AG04449 (cell line): ENCODE measurements at regions of chr14 and their contacts with region 1.

Region 1: GRCh38 chr14:68843471-68844209 is 50.8 kb upstream of the ZFP36L1 start:
- DNase-seq: no peak
- H3K4me3 ChIP-seq: no peak overlapping the region
- CTCF ChIP-seq: peak; percentile 94

Region 2: DNA sequence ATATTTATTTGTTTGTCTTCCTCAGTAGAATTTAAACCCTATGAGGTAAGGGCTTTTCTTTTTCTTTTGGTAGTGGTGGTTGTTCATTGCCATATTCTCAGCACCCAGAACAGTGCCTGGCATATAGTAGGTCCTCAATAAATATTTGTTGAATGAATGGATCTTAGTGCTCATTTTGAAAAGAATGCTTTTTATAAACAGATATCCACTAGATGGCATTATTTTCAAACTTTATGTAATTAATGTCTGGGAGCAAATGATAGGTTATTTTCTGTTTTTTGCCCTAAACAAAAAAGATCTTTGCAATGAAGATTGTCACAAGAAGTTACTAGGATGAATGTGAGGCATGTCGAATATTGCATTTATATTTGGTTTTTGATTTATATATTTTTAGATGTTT is 959.9 kb before region 1 on chr14:
- CTCF ChIA-PET with region 1: interaction called, 72 read pairs
- POLR2A ChIA-PET with region 1: no interaction called
- DNase-seq: no peak
- H3K4me3 ChIP-seq: no peak overlapping the region
- CTCF ChIP-seq: no peak

Region 3: GRCh38 chr14:67934008-67934481 is 909.6 kb before region 1 on chr14:
- CTCF ChIA-PET with region 1: interaction called, 40 read pairs
- POLR2A ChIA-PET with region 1: no interaction called
- DNase-seq: peak; percentile 29
- H3K4me3 ChIP-seq: no peak overlapping the region
- CTCF ChIP-seq: peak; percentile 49

Region 4: GRCh38 chr14:68248481-68249255 is 595.0 kb before region 1 on chr14:
- CTCF ChIA-PET with region 1: interaction called, 19 read pairs
- POLR2A ChIA-PET with region 1: no interaction called
- DNase-seq: no peak
- H3K4me3 ChIP-seq: no peak overlapping the region
- CTCF ChIP-seq: peak; percentile 21

Region 5: DNA sequence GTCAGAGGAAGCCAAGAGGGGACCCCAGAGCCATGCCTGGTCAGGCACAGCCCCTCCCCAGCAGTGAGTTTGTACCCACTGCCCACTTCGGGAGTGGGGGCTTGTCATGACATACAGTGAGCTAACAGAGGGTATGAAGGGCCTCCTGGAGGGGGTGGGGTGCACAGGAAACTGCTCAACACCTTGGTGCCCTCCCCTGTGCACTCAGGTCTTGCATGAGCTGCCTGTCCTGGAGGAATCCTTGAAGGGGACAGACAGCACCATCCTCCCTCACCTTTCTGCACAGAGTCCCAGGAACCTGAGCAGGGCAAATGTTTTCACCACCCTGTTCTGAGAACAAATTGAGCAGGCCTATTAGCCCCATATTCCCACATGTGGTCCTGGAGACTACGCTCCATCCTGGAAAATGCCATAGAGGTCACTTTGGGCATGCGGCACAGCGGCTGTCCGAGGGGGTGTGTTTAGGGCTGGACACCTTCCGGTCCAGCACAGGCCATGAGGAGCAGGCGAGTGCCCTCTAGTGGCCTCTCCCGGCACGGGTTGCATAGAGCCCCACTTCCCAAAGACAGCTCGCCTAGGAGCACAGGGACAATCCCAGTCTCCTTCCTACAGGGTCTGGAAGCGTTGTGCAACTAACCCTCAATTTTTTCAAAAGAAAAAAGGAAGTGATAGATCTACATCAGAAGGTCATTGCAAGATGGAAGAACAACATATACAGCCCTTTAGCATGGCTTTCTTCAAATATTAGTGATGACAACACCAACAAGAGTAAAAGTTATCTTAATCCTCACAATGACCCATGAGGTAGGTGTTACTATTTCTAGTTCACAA is 18.9 kb before region 1 on chr14:
- CTCF ChIA-PET with region 1: interaction called, 27 read pairs
- POLR2A ChIA-PET with region 1: no interaction called
- DNase-seq: no peak
- H3K4me3 ChIP-seq: no peak overlapping the region
- CTCF ChIP-seq: peak; percentile 93

Region 6: GRCh38 chr14:68862954-68863594 is 19.4 kb after region 1 on chr14:
- CTCF ChIA-PET with region 1: interaction called, 14 read pairs
- POLR2A ChIA-PET with region 1: no interaction called
- DNase-seq: peak; percentile 16
- H3K4me3 ChIP-seq: no peak overlapping the region
- CTCF ChIP-seq: peak; percentile 81